Mammary epithelial cell (primary cell): ENCODE measurements at regions of chr6 and their contacts with region 1.

Region 1: DNA sequence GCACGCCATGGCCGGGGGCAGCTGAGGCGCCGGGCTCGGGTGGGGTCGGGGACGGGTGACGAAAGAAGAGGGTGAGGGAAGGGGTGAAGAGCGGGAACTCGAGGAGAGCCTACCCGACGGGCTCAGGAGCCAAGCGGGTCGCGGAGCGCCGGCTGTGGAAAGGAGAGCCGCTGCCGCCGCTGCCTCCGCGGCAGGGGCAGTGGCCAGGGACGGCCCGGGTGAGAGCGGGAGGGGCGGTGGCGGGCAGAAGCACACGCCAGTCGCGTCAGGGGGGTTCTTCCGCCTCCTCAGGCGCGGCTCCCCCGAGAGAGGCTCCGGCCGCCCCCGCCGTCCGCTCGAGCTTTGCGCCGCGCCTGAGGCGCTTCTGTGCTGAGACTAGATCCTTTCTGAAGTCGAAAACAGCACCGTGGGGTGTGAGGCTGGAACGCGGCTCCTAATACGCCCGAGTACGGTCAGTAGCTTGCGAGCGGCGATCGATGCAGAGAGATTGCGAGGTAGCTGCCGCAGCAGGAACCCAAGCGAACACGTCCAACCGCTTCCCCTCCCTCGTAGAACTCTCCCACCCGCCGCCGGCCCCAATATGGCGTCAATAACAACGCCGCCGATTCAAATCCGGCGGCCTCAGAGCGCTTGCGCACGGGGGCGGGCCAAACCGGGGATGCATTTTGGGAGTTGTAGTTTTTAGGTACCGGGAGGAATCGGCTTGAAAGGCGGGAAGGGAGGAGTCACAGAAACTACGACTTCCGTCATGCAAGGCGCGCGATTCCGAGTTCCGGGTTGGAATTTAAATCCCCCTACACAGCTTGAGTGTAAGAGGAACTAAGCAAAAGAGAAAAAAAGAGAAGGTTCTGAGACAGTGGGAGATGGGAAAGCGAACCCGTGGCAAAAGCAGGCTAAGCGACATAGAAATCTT is at the start of gene AKIRIN2:
- DNase-seq: peak; percentile 98
- H3K4me3 ChIP-seq: peak within 1 kb of the TSS; percentile 68 to 90 (median 85)
- H3K27ac ChIP-seq: peak within 1 kb of the TSS; percentile 94
- H3K4me1 ChIP-seq: peaks cover 15% of the 10 kb centered on the region
- H3K27me3 ChIP-seq: no peaks in the 10 kb centered on the region
- CTCF ChIP-seq: no peak
- total RNA-seq, gene AKIRIN2: 32.7 to 65.7 TPM

Region 2: GRCh38 chr6:87606199-87606598 is 95.7 kb before region 1 on chr6:
- CTCF ChIA-PET with region 1: no interaction called
- dilution Hi-C with region 1: loop called (anchors 5 kb)
- in situ Hi-C with region 1: no loop called
- intact Hi-C with region 1: no loop called
- DNase-seq: no peak
- H3K4me3 ChIP-seq: no peak overlapping the region
- H3K27ac ChIP-seq: no peak overlapping the region
- H3K4me1 ChIP-seq: no peaks in the 10 kb centered on the region
- H3K27me3 ChIP-seq: no peaks in the 10 kb centered on the region
- CTCF ChIP-seq: no peak

Region 3: GRCh38 chr6:87731818-87732661 is 30.1 kb after region 1 on chr6:
- CTCF ChIA-PET with region 1: interaction called, 16 read pairs
- dilution Hi-C with region 1: no loop called
- in situ Hi-C with region 1: no loop called
- intact Hi-C with region 1: loop called (anchors 1 kb)
- DNase-seq: peak; percentile 98
- H3K4me3 ChIP-seq: no peak overlapping the region
- H3K27ac ChIP-seq: peak overlapping the region; percentile 92
- H3K4me1 ChIP-seq: peaks cover 44% of the 10 kb centered on the region
- H3K27me3 ChIP-seq: no peaks in the 10 kb centered on the region
- CTCF ChIP-seq: no peak

Region 4: DNA sequence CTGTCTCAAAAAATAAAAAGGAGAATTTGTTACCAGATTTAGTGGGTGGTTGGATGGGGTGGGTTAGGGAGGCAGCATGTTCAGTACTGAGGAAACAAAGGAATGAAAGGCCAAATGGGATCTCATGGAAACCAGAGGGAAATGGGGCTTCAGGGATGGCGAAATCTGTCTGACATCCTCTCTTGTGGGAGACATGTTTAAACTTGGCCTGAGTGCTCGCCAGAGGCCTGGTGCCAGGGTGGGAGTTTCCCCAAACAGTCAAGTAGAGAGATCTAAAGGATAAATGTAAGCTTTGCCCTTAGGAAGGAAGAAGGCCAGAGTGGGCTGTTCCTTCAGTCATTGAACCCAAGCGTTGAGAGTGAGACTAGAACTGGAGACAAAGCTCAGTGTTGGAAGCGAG is 62.0 kb after region 1 on chr6:
- CTCF ChIA-PET with region 1: no interaction called
- dilution Hi-C with region 1: loop called (anchors 5 kb)
- in situ Hi-C with region 1: no loop called
- intact Hi-C with region 1: no loop called
- DNase-seq: peak; percentile 73
- H3K4me3 ChIP-seq: no peak overlapping the region
- H3K27ac ChIP-seq: no peak overlapping the region
- H3K4me1 ChIP-seq: peaks cover 4% of the 10 kb centered on the region
- H3K27me3 ChIP-seq: no peaks in the 10 kb centered on the region
- CTCF ChIP-seq: no peak

Region 5: GRCh38 chr6:87799651-87800050 is 97.7 kb after region 1 on chr6:
- CTCF ChIA-PET with region 1: no interaction called
- dilution Hi-C with region 1: no loop called
- in situ Hi-C with region 1: loop called (anchors 5 to 10 kb)
- intact Hi-C with region 1: loop called (anchors 1 kb)
- DNase-seq: no peak
- H3K4me3 ChIP-seq: no peak overlapping the region
- H3K27ac ChIP-seq: no peak overlapping the region
- H3K4me1 ChIP-seq: peaks cover 18% of the 10 kb centered on the region
- H3K27me3 ChIP-seq: no peaks in the 10 kb centered on the region
- CTCF ChIP-seq: no peak

Region 6: DNA sequence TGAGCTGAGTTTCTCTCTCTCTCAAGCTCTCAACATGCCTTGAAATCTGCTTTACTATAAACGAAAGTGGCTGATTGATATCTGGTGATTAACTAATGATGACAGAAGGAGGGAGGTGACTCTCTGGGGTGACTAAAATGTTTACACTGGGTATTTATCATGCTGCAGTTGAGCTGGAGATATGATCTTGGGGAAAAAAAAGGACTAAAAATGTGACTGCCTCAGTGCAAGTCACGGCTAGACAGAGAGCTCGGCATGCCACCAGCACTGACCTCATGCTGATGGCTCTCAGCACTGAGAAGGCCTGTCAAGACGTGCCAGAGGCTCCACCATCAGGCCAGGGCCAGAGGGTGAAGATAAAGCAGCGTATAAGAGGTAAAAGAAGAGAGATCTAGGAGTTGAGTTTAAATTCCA is 242.6 kb after region 1 on chr6:
- CTCF ChIA-PET with region 1: no interaction called
- dilution Hi-C with region 1: no loop called
- in situ Hi-C with region 1: no loop called
- intact Hi-C with region 1: loop called (anchors 10 kb)
- DNase-seq: peak; percentile 93
- H3K4me3 ChIP-seq: no peak overlapping the region
- H3K27ac ChIP-seq: peak overlapping the region; percentile 54
- H3K4me1 ChIP-seq: peaks cover 25% of the 10 kb centered on the region
- H3K27me3 ChIP-seq: peaks cover 3% of the 10 kb centered on the region
- CTCF ChIP-seq: peak in 1 of 2 donors; percentile 49